IMR-90 (cell line): ENCODE measurements at regions of chr2 and their contacts with region 1.

Region 1: GRCh38 chr2:171837736-171838135 is 56.3 kb downstream of the SLC25A12 start:
- DNase-seq: peak; percentile 24
- ATAC-seq: peak; percentile 40; the same call in 1 of the 2 replicates
- H3K4me3 ChIP-seq: no peak overlapping the region
- H3K27ac ChIP-seq: no peak overlapping the region
- H3K4me1 ChIP-seq: no peaks in the 10 kb centered on the region
- H3K27me3 ChIP-seq: no peaks in the 10 kb centered on the region
- CTCF ChIP-seq: no peak
- POLR2A ChIP-seq: no peak
- RAD21 ChIP-seq: no peak

Region 2: DNA sequence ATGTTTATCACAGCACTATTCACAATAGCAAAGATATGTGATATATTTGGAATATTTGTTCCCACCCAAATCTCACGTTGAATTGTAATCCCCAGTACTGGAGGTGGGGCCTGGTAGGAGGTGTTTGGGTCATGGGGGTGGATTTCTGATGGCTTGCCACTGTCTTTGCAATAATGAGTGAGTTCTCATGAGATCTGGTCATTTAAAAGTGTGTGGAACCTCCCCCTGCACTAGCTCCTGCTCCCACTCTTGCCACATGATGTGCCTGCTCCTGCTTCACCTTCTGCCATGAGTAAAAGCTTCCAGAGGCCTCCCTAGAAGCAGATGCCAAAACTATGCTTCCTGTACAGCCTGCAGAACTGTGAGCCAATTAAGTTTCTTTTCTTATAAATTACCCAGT is 222.7 kb before region 1 on chr2:
- CTCF ChIA-PET with region 1: no interaction called
- POLR2A ChIA-PET with region 1: no interaction called
- dilution Hi-C with region 1: no loop called
- in situ Hi-C with region 1: no loop called
- intact Hi-C with region 1: no loop called
- DNase-seq: peak; percentile 27
- ATAC-seq: peak; percentile 53
- H3K4me3 ChIP-seq: no peak overlapping the region
- H3K27ac ChIP-seq: no peak overlapping the region
- H3K4me1 ChIP-seq: peaks cover 3% of the 10 kb centered on the region; the same call in 1 of the 2 replicates
- H3K27me3 ChIP-seq: peaks cover 9% of the 10 kb centered on the region
- CTCF ChIP-seq: no peak
- POLR2A ChIP-seq: no peak
- RAD21 ChIP-seq: no peak

Region 3: GRCh38 chr2:171852366-171852888 is 14.7 kb after region 1 on chr2:
- CTCF ChIA-PET with region 1: no interaction called
- POLR2A ChIA-PET with region 1: interaction called, 14 read pairs
- dilution Hi-C with region 1: no loop called
- in situ Hi-C with region 1: no loop called
- intact Hi-C with region 1: no loop called
- DNase-seq: peak; percentile 27
- ATAC-seq: no peak
- H3K4me3 ChIP-seq: no peak overlapping the region
- H3K27ac ChIP-seq: no peak overlapping the region
- H3K4me1 ChIP-seq: no peaks in the 10 kb centered on the region
- H3K27me3 ChIP-seq: no peaks in the 10 kb centered on the region
- CTCF ChIP-seq: no peak
- POLR2A ChIP-seq: no peak
- RAD21 ChIP-seq: no peak